PC-9 (cell line): ENCODE measurements at regions of chr10 and their contacts with region 1.

Region 1: DNA sequence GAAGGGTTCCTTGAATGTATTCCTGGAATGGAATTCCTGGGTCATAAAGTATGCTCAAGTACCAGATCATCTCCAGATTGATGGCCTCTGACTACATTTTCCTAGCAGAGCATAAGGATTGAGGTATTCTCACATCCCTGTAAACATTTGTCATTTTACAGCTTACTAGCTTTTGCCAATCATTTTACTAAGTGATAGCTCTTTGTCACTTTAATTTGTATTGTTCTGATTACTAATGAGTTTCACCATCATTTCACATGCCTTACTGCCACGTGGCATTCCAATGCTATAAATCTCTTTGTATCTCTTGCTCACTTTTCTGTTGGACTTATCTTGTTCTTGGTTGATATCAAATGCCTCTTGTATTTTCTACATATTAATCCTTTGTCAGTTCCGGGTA is 68.6 kb upstream of the CACNB2 start:
- DNase-seq: no peak
- H3K4me3 ChIP-seq: no peak overlapping the region
- H3K27ac ChIP-seq: no peak overlapping the region
- H3K4me1 ChIP-seq: no peaks in the 10 kb centered on the region
- H3K27me3 ChIP-seq: no peaks in the 10 kb centered on the region
- CTCF ChIP-seq: no peak

Region 2: GRCh38 chr10:17961551-17962422 is 109.8 kb before region 1 on chr10:
- CTCF ChIA-PET with region 1: no interaction called
- POLR2A ChIA-PET with region 1: no interaction called
- intact Hi-C with region 1: no loop called
- DNase-seq: peak in 1 of 2 experiments; percentile 14
- H3K4me3 ChIP-seq: no peak overlapping the region
- H3K27ac ChIP-seq: no peak overlapping the region
- H3K4me1 ChIP-seq: no peaks in the 10 kb centered on the region
- H3K27me3 ChIP-seq: no peaks in the 10 kb centered on the region
- CTCF ChIP-seq: no peak

Region 3: GRCh38 chr10:18059826-18060559 is 11.6 kb before region 1 on chr10:
- CTCF ChIA-PET with region 1: no interaction called
- POLR2A ChIA-PET with region 1: interaction called, 10 read pairs
- intact Hi-C with region 1: no loop called
- DNase-seq: no peak
- H3K4me3 ChIP-seq: no peak overlapping the region
- H3K27ac ChIP-seq: no peak overlapping the region
- H3K4me1 ChIP-seq: no peaks in the 10 kb centered on the region
- H3K27me3 ChIP-seq: no peaks in the 10 kb centered on the region
- CTCF ChIP-seq: no peak

Region 4: DNA sequence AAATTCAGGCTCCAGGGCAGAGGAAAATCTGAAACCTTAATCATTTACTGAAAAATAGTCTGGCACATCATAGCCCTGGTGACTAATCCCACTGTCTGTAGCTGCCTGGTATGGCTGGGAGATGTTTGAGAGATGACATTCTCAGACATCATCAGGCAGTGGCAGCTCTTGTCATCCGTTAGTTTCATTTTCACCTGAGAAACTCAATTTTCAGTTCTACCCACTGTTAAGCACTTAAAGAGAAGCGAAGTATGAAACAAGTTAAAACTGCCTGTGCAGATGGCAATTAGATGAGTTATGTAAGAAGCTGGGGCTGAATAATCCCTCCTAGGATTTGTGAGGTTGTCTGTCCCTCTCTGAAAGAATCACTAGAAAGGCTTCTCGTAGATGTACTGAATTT is 429.6 kb after region 1 on chr10:
- CTCF ChIA-PET with region 1: no interaction called
- POLR2A ChIA-PET with region 1: no interaction called
- intact Hi-C with region 1: no loop called
- DNase-seq: no peak
- H3K4me3 ChIP-seq: no peak overlapping the region
- H3K27ac ChIP-seq: no peak overlapping the region
- H3K4me1 ChIP-seq: no peaks in the 10 kb centered on the region
- H3K27me3 ChIP-seq: no peaks in the 10 kb centered on the region; the same call in 1 of the 2 replicates
- CTCF ChIP-seq: no peak